ENCODE measurements at regions of chr3 and their contacts with region 1.

Region 1: DNA sequence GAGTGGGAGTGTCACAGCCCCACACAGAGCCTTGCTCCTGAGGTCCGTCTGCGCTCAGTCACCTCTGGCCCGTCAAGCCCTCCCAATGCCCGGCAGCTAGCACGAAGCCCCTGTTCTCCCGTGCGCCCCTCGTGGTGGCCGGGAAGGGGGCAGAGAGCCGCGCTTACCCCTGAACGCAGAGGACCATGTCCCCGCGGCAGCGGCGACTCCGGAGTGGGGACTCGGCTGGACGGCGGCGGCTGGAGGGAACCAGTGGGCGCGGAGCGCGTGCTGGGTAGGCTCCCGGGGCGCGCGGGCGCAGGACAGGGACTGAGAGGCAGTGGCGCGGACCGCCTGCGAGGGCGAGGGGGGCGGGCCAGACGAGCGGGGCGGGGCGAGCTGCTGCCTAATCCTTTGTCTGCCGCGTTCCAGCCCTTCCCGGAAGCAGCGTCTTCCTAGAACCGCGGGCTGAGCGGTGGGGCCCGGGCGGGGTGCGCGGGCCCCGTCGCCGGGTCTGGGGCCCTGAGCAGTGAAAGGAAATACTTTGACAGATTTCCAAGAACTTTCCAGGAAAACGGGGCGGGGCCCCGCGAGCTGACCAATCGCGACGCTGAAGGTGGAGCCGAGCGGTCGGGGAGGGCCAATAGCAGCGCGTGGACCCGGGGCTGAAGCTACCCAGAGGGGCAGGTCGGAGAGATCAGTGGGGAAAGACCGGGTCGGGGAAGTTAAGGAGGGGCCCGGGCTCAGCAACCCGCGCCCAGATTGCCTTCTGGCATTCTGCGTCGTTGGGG is at the start of gene CISH:
- DNase-seq: peak; percentile 98
- ATAC-seq: peak; percentile 87
- total RNA-seq, gene CISH: 13.2 TPM

Region 2: GRCh38 chr3:50350527-50351322 is 260.9 kb before region 1 on chr3 and contains the starts of genes CYB561D2 and NPRL2:
- intact Hi-C with region 1: loop called (anchors 5 kb)
- DNase-seq: peak; percentile 99
- ATAC-seq: peak; percentile 95
- total RNA-seq, gene CYB561D2: 6.3 TPM
- total RNA-seq, gene NPRL2: 16.7 TPM

Region 3: GRCh38 chr3:50519471-50520089 is 92.1 kb before region 1 on chr3:
- intact Hi-C with region 1: loop called (anchors 1 kb)
- DNase-seq: no peak
- ATAC-seq: no peak

Region 4: GRCh38 chr3:50652709-50653108 is 41.1 kb after region 1 on chr3:
- intact Hi-C with region 1: loop called (anchors 1 kb)
- DNase-seq: no peak
- ATAC-seq: peak; percentile 38

Region 5: DNA sequence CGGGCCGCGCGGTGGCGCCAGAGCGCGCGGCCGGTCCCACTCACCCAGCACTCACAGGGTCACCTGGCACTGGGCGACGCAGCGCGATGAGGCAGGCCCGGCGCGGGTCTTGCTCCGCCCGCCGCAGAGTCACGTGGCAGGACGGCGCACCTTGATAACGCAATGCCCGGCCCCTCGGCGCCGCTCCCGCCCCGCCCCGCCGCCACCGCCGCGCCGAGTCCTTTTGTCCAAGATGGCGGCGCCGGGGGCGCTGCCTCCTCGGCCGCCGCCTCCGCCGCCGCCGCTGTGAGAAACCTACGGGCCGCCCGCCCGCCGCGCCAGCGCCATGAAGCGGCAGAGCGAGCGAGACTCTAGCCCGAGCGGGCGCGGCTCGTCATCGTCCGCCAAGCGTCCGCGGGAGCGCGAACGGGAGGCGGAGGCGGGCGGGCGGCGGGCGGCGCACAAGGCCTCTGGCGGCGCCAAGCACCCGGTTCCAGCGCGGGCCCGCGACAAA is 779.5 kb after region 1 on chr3 and contains the start of gene RBM15B:
- intact Hi-C with region 1: loop called (anchors 5 kb)
- DNase-seq: peak; percentile 100
- ATAC-seq: peak; percentile 96
- total RNA-seq, gene RBM15B: 11.8 TPM